ENCODE measurements at regions of chr11 and their contacts with region 1.

Region 1: DNA sequence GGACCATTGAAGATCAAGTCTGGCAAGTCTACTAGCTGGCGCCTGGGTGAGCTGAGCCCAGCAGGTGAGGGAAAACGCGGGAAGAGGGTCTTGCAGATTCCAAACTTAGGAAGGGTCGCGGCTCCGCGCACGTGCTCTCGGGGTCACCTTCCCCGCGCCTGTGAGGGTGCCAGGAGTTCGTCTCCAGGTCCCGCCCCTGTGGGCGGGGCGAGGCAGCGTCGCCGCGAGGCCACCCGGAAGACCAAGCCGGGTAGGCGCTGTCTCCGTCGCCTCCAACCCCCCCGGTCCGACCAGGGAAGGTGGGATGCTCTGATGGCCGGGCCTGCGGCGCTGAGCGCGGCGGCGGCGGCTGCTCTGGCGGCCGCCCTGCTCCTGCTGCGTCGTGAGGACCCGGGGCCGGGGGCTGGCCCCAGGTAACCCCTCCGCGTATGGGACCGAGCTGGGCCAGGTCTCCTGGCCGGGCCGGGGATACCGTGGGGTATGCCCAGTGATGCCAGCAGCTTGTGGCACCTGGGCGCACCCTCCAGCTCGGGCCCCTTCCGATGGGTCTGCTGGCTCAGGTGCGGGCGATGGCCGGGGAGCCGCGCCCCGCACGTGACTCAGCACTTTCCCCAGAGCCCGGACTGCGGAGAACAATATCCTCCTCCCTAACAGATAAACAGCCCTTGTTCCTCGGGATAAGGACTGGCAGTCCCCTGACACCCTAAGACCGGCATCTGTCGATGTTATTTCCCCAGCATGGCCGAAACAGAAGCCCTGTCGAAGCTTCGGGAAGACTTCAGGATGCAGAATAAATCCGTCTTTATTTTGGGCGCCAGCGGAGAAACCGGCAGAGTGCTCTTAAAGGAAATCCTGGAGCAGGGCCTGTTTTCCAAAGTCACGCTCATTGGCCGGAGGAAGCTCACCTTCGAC is at the start of gene HTATIP2:
- DNase-seq: peak; percentile 73 to 80 (median 77)
- H3K4me3 ChIP-seq: peak within 1 kb of the TSS; percentile 24 to 78
- H3K4me3 Mint-ChIP-seq: peak within 1 kb of the TSS; percentile 89 to 95 (median 92)
- H3K27ac ChIP-seq: peak within 1 kb of the TSS; percentile 70
- H3K27ac Mint-ChIP-seq: peak within 1 kb of the TSS; percentile 91 to 98 (median 95)
- H3K4me1 ChIP-seq: peaks cover 64% of the 10 kb centered on the region
- H3K4me1 Mint-ChIP-seq: peaks cover 50 to 77% (median 64%) of the 10 kb centered on the region in 4 donors
- H3K27me3 ChIP-seq: no peaks in the 10 kb centered on the region
- H3K27me3 Mint-ChIP-seq: no peaks in the 10 kb centered on the region
- total RNA-seq, gene HTATIP2: 45.3 to 49.9 TPM

Region 2: GRCh38 chr11:20387241-20388095 is 23.7 kb after region 1 on chr11 and contains the start of gene PRMT3:
- CTCF ChIA-PET with region 1: interaction called, 5 read pairs
- POLR2A ChIA-PET with region 1: interaction called, 5 read pairs
- intact Hi-C with region 1: loop called (anchors 1 kb)
- DNase-seq: peak; percentile 96 to 98 (median 98)
- H3K4me3 ChIP-seq: peak within 1 kb of the TSS; percentile 83 to 88
- H3K4me3 Mint-ChIP-seq: peak within 1 kb of the TSS; percentile 94 to 99 (median 98)
- H3K27ac ChIP-seq: peak within 1 kb of the TSS; percentile 73
- H3K27ac Mint-ChIP-seq: peak within 1 kb of the TSS; percentile 98 to 100 (median 99)
- H3K4me1 ChIP-seq: peaks cover 24% of the 10 kb centered on the region
- H3K4me1 Mint-ChIP-seq: peaks cover 16 to 36% (median 25%) of the 10 kb centered on the region in 4 donors
- H3K27me3 ChIP-seq: no peaks in the 10 kb centered on the region
- H3K27me3 Mint-ChIP-seq: no peaks in the 10 kb centered on the region
- total RNA-seq, gene PRMT3: 17.5 to 19.7 TPM